Tibial artery (tissue), 4 donors: ENCODE measurements at regions of chr10 and their contacts with region 1.

Region 1: GRCh38 chr10:3451381-3452172 is 279.0 kb upstream of the PITRM1 start:
- DNase-seq: no peak
- H3K4me3 ChIP-seq: peak overlapping the region in 1 of 2 donors; percentile 22
- H3K27ac ChIP-seq: peak overlapping the region; percentile 64 to 68
- H3K4me1 ChIP-seq: peaks cover 0 to 26% (median 17%) of the 10 kb centered on the region in 4 donors
- H3K27me3 ChIP-seq: no peaks in the 10 kb centered on the region
- CTCF ChIP-seq: no peak

Region 2: GRCh38 chr10:3525832-3526449 is 74.4 kb after region 1 on chr10:
- intact Hi-C with region 1: loop called (anchors 2 kb)
- DNase-seq: peak; percentile 70 to 78
- H3K4me3 ChIP-seq: no peak overlapping the region
- H3K27ac ChIP-seq: peak overlapping the region; percentile 48 to 68
- H3K4me1 ChIP-seq: peaks cover 0 to 46% (median 29%) of the 10 kb centered on the region in 4 donors
- H3K27me3 ChIP-seq: no peaks in the 10 kb centered on the region
- CTCF ChIP-seq: no peak